ENCODE measurements at regions of chr20 and their contacts with region 1.

Region 1: GRCh38 chr20:22339091-22339881 is 245.1 kb downstream of the FOXA2 start:
- DNase-seq: peak; percentile 26 to 45 (median 32)
- H3K4me3 ChIP-seq: no peak overlapping the region
- H3K4me3 Mint-ChIP-seq: peak overlapping the region in 1 of 2 donors; percentile 69
- H3K27ac ChIP-seq: no peak overlapping the region
- H3K27ac Mint-ChIP-seq: no peak overlapping the region
- H3K4me1 ChIP-seq: peaks cover 0 to 4% of the 10 kb centered on the region in 2 donors
- H3K4me1 Mint-ChIP-seq: peaks cover 11% of the 10 kb centered on the region
- H3K27me3 ChIP-seq: peaks cover 0 to 4% of the 10 kb centered on the region in 2 donors
- H3K27me3 Mint-ChIP-seq: peaks cover 0 to 5% (median 5%) of the 10 kb centered on the region in 3 donors
- CTCF ChIP-seq: peak; percentile 86

Region 2: GRCh38 chr20:22260506-22260905 is 78.8 kb before region 1 on chr20:
- intact Hi-C with region 1: no loop called
- DNase-seq: no peak
- H3K4me3 ChIP-seq: no peak overlapping the region
- H3K4me3 Mint-ChIP-seq: no peak overlapping the region
- H3K27ac ChIP-seq: no peak overlapping the region
- H3K27ac Mint-ChIP-seq: no peak overlapping the region
- H3K4me1 ChIP-seq: no peaks in the 10 kb centered on the region
- H3K4me1 Mint-ChIP-seq: no peaks in the 10 kb centered on the region
- H3K27me3 ChIP-seq: no peaks in the 10 kb centered on the region
- H3K27me3 Mint-ChIP-seq: peaks cover 0 to 5% (median 4%) of the 10 kb centered on the region in 3 donors
- CTCF ChIP-seq: no peak

Region 3: GRCh38 chr20:22411627-22412450 is 72.6 kb after region 1 on chr20:
- intact Hi-C with region 1: no loop called
- DNase-seq: no peak
- H3K4me3 ChIP-seq: no peak overlapping the region
- H3K4me3 Mint-ChIP-seq: no peak overlapping the region
- H3K27ac ChIP-seq: no peak overlapping the region
- H3K27ac Mint-ChIP-seq: no peak overlapping the region
- H3K4me1 ChIP-seq: peaks cover 0 to 6% of the 10 kb centered on the region in 2 donors
- H3K4me1 Mint-ChIP-seq: peaks cover 9% of the 10 kb centered on the region
- H3K27me3 ChIP-seq: no peaks in the 10 kb centered on the region
- H3K27me3 Mint-ChIP-seq: peaks cover 0 to 3% (median 2%) of the 10 kb centered on the region in 3 donors
- CTCF ChIP-seq: no peak

Region 4: DNA sequence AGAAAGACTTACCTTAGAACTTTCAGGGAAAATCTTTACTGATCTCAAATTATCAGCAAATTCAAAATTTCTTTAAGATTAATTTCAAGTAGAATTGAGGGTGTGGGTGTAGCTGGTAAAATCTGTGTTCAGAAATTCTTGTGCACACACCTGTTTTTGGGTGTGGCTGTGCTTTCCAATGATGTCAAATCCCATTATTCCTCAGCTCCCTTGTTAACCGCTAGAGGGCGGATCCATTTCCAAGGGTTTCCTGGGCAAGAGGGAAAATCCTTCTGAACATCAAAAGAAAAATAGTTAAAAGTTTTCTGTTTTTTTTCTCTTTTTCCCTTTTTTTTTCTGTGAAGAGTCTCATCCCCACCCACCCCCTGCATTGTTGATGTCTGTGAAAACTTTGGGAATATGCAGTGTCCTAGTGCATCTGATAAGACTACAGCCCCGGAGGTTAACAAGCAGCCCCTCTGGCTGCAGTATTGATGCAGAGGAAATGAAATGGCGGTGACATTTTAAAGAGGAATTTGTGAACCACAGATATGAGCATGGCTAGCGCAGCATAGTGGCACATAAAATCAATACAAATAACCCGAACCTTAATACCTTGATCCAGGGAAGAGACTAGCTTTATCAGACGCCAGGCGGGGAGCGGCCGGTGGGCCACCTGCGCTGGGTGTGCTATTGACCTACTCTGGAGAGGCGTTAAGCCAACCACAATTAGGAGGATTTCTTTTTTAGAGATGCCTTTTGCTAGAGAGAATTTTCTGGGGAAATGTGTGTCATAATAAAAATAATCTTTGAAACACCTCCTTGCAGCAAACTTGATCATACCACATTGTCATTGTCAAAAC is 114.2 kb after region 1 on chr20:
- intact Hi-C with region 1: no loop called
- DNase-seq: no peak
- H3K4me3 ChIP-seq: no peak overlapping the region
- H3K4me3 Mint-ChIP-seq: no peak overlapping the region
- H3K27ac ChIP-seq: no peak overlapping the region
- H3K27ac Mint-ChIP-seq: no peak overlapping the region
- H3K4me1 ChIP-seq: peaks cover 4 to 5% of the 10 kb centered on the region in 2 donors
- H3K4me1 Mint-ChIP-seq: peaks cover 7% of the 10 kb centered on the region
- H3K27me3 ChIP-seq: peaks cover 0 to 2% of the 10 kb centered on the region in 2 donors
- H3K27me3 Mint-ChIP-seq: peaks cover 2 to 12% (median 5%) of the 10 kb centered on the region in 3 donors
- CTCF ChIP-seq: peak; percentile 34

Region 5: DNA sequence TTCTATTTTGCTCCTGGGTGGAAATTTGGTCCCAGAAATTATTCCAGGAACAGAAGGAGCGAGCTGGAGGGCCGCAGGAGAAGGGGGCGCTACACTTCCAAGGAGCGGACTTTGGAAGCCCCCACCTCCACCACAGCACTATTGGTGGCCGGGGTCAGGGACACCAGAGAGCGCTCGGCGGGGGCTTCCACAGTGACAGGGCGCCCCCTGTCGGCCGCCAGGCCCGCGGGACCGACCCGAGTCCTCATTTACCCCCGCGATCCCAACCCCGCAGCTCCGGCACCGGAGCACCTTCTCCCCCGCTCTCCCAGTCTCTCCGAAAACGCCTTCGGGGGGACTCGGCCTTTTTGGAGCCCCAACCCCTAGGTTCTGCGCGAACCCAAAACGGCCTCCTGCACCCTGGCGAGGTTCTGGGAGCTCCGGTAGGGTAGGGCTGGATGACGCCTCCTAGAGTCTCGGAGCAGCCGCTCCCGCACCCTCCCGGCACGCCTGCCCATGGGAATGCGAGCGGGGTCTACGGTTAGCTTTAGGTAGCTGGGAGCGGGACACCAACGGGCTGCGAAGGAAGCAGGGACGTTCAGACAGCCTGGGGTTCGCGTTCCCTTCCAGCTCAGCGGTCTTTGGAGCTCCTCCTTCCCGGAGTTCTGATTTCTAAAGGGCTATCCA is 247.5 kb after region 1 on chr20:
- intact Hi-C with region 1: loop called in 1 of 2 experiments (anchors 5 kb)
- DNase-seq: no peak
- H3K4me3 ChIP-seq: no peak overlapping the region
- H3K4me3 Mint-ChIP-seq: peak overlapping the region in 1 of 2 donors; percentile 85
- H3K27ac ChIP-seq: no peak overlapping the region
- H3K27ac Mint-ChIP-seq: peak overlapping the region in 1 of 7 donors; percentile 50
- H3K4me1 ChIP-seq: no peaks in the 10 kb centered on the region
- H3K4me1 Mint-ChIP-seq: peaks cover 4% of the 10 kb centered on the region
- H3K27me3 ChIP-seq: peaks cover 76 to 94% of the 10 kb centered on the region in 2 donors
- H3K27me3 Mint-ChIP-seq: peaks cover 78 to 91% (median 81%) of the 10 kb centered on the region in 3 donors
- CTCF ChIP-seq: peak; percentile 26

Region 6: DNA sequence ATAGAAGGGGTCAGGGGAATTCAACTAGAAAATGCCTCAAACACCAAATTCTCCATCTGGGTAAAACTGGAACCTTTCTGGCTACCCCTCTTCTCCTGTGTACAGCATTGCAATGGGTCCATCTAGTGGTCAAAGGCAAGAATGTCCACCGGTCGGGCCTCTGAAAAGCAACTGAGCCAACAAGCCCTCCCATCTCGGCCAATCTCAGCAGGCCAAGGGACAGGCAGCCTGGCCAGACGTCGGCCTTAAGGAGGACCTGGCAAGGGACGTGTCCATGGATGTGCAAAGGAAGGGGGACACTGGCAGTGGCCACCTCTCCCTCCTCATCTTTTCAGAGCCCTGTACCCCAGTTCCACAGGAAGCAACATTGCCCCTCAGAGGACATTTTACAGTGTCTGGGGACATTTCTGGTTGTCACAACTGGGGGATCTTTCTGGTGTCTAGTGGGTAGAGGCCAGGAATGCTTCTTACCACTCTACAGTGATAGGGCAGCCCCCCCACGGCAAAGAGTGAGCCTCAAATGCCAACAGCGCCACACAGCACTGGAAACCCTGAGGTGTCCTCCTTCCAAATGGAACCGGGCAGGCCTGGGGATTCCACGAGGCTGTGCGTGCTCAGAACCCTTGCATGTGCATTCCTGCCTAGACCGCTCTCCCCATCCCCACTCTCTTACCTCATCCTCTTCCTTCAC is 344.9 kb after region 1 on chr20:
- intact Hi-C with region 1: loop called (anchors 2 to 5 kb)
- DNase-seq: peak; percentile 44 to 60 (median 57)
- H3K4me3 ChIP-seq: no peak overlapping the region
- H3K4me3 Mint-ChIP-seq: no peak overlapping the region
- H3K27ac ChIP-seq: no peak overlapping the region
- H3K27ac Mint-ChIP-seq: no peak overlapping the region
- H3K4me1 ChIP-seq: peaks cover 32 to 34% of the 10 kb centered on the region in 2 donors
- H3K4me1 Mint-ChIP-seq: peaks cover 40% of the 10 kb centered on the region
- H3K27me3 ChIP-seq: no peaks in the 10 kb centered on the region
- H3K27me3 Mint-ChIP-seq: peaks cover 0 to 5% (median 2%) of the 10 kb centered on the region in 3 donors
- CTCF ChIP-seq: peak; percentile 82

Region 7: DNA sequence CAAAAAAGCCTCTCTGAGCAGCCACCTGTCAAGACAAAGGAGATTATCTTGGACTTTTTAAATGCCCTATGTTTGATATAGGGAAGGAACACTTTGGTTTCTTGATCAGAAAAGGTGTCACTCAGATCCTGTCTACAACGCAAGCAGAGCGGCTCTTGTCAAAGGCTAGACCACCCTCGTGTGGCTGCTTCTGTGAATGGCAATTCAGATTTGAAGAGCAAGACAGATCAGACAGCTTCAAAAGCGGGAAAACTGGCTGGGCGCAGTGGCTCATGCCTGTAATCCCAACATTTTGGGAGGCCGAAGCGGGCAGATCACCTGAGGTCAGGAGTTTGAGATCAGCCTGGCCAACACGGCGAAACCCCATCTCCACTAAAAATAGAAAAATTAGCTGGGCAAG is 1001.2 kb after region 1 on chr20:
- intact Hi-C with region 1: loop called in 1 of 2 experiments (anchors 5 kb)
- DNase-seq: peak; percentile 30 to 58 (median 42)
- H3K4me3 ChIP-seq: no peak overlapping the region
- H3K4me3 Mint-ChIP-seq: peak overlapping the region in 1 of 2 donors; percentile 26
- H3K27ac ChIP-seq: no peak overlapping the region
- H3K27ac Mint-ChIP-seq: no peak overlapping the region
- H3K4me1 ChIP-seq: no peaks in the 10 kb centered on the region
- H3K4me1 Mint-ChIP-seq: peaks cover 2% of the 10 kb centered on the region
- H3K27me3 ChIP-seq: no peaks in the 10 kb centered on the region
- H3K27me3 Mint-ChIP-seq: peaks cover 0 to 5% (median 0%) of the 10 kb centered on the region in 3 donors
- CTCF ChIP-seq: peak; percentile 80